ENCODE measurements at regions of chr9 and their contacts with region 1.

Region 1: DNA sequence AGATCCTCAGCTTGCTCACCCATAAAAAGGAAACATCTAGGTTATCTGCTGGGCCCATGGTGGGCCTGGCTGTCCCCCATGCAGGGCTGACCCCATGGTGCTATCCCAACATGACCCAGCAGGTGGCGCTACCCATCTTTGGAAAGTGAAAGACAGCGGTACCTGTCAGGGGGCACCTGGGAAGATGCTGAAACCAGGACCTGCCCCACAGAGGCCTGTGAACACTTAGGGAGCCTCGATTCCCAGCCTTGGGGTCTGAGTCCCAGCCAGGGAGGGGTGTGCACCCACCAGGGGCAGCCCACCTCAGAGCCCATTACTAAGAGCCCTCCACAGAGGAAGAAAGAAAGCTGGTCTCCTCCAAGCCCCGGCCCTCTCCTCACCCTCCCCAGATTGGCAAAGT is 46.6 kb upstream of the IPPK start:
- DNase-seq: peak; percentile 79
- ATAC-seq: peak; percentile 76
- H3K4me3 ChIP-seq: no peak overlapping the region
- H3K27ac ChIP-seq: no peak overlapping the region
- H3K4me1 ChIP-seq: no peaks in the 10 kb centered on the region
- H3K27me3 ChIP-seq: no peaks in the 10 kb centered on the region
- CTCF ChIP-seq: peak; percentile 92

Region 2: DNA sequence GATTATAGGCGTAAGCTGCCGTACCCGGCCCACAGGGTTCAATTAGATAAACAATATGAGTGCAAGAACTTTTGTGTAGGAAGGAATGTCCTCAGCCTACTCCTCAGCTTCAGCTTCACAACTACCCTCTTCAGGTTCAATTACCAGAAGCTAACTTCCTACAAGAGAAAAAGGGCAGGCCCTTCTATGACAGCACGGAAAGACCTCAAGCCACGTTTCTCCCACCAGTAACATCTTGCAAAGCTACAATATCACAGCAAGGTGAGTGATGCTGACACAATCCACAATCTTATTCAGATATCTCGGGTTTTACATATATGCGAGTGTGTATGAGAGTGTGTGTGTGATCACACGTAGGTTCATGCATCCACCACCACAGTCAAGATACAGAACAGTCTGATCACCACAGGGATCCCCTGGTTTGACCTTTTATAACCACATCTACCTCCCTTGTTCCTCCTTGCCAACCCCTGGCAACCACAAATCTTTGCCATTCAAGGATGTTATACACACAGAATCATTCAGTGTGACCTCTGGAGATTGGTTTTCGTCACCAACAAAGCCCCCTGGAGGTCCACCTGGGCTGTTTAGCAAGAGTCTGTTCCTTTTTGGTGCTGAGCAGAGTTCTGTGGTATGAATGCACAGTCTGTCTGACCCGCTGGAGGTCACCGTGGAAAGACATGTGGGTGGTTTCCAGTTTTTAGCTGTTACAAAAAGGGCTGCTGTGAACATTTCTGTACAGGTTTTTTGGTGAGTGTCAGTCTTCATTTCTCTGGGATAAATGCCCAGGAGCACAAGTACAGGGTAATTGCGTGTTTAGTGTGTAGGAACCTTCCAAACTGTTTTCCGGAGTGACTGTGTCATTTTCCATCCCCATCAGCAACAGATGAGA is 84.9 kb before region 1 on chr9:
- intact Hi-C with region 1: no loop called
- DNase-seq: no peak
- ATAC-seq: no peak
- H3K4me3 ChIP-seq: no peak overlapping the region
- H3K27ac ChIP-seq: no peak overlapping the region
- H3K4me1 ChIP-seq: no peaks in the 10 kb centered on the region
- H3K27me3 ChIP-seq: no peaks in the 10 kb centered on the region
- CTCF ChIP-seq: no peak

Region 3: GRCh38 chr9:92764988-92765936 is 48.7 kb after region 1 on chr9:
- intact Hi-C with region 1: loop called (anchors 10 kb)
- DNase-seq: peak; percentile 99
- ATAC-seq: peak; percentile 96
- H3K4me3 ChIP-seq: peak overlapping the region; percentile 98
- H3K27ac ChIP-seq: peak overlapping the region; percentile 100
- H3K4me1 ChIP-seq: peaks cover 37% of the 10 kb centered on the region
- H3K27me3 ChIP-seq: no peaks in the 10 kb centered on the region
- CTCF ChIP-seq: peak; percentile 95

Measured in upper lobe of right lung (tissue), 1 donor.